ENCODE measurements at regions of chr12 and their contacts with region 1.

Region 1: GRCh38 chr12:53379389-53380103 is 430 bp upstream of the SP1 start:
- DNase-seq: peak; percentile 92 to 100
- ATAC-seq: peak; percentile 84 to 92 (median 90)
- H3K4me3 ChIP-seq: peak overlapping the region; percentile 44 to 88 (median 64)
- H3K27ac ChIP-seq: peak overlapping the region; percentile 92 to 99 (median 98)
- H3K4me1 ChIP-seq: peaks cover 18 to 46% (median 44%) of the 10 kb centered on the region in 9 donors
- H3K27me3 ChIP-seq: no peaks in the 10 kb centered on the region
- CTCF ChIP-seq: no peak

Region 2: GRCh38 chr12:53365245-53365904 is 14.2 kb before region 1 on chr12:
- intact Hi-C with region 1: no loop called
- DNase-seq: no peak
- ATAC-seq: peak in 7 of 8 donors; percentile 28 to 83 (median 56)
- H3K4me3 ChIP-seq: no peak overlapping the region
- H3K27ac ChIP-seq: peak overlapping the region in 2 of 10 donors; percentile 22 to 85
- H3K4me1 ChIP-seq: peaks cover under 1 to 44% (median 3%) of the 10 kb centered on the region in 9 donors
- H3K27me3 ChIP-seq: no peaks in the 10 kb centered on the region
- CTCF ChIP-seq: no peak

Region 3: GRCh38 chr12:53414756-53415417 is 35.3 kb after region 1 on chr12:
- intact Hi-C with region 1: loop called in 1 of 10 experiments (anchors 5 kb)
- DNase-seq: no peak
- ATAC-seq: peak in 2 of 8 donors; percentile 4 to 19
- H3K4me3 ChIP-seq: no peak overlapping the region
- H3K27ac ChIP-seq: peak overlapping the region in 3 of 10 donors; percentile 11 to 62 (median 23)
- H3K4me1 ChIP-seq: peaks cover 15 to 56% (median 39%) of the 10 kb centered on the region in 9 donors
- H3K27me3 ChIP-seq: no peaks in the 10 kb centered on the region
- CTCF ChIP-seq: no peak

Region 4: DNA sequence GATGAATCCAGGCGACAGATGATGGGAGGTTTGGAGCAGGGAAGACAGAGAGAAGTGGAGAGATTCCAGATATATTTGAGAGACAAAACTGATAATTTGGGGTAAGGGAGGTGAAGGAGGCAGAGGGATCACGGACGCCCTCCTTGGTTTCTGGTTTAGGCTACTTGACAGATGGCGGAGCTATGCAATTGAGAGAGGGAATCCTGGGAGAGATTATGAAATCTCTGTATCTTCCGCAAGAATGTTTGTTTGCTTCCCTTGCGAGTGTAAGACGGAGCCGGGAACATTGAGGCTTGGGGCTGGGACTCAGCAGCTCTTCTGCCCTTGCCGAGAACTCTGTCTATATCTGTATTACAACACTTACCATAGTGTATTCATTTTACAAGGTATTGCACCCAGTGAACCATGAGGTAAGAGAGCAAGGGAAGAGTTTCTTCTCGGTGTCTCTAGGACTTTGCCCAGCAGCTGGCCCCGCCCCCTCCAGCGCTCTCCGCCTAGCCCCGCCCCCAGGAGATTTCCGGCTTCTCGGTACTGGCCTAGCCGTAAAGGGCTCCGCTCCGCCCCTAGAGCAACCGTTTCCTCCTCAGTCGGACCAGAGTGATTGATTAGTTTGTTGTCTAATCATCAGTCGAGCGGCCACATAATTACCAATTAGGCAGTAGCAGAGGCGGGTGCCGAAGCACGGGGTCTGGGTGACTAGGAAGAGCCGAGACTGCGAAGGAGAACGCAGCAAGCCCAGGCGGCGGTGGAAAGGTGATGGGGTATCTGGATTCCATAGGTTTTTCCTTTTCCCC is 61.7 kb after region 1 on chr12 and contains the start of gene PRR13:
- intact Hi-C with region 1: loop called in 1 of 10 experiments (anchors 1 kb)
- DNase-seq: peak; percentile 98 to 100
- ATAC-seq: peak; percentile 98 to 100 (median 99)
- H3K4me3 ChIP-seq: peak within 1 kb of the TSS; percentile 48 to 91 (median 74)
- H3K27ac ChIP-seq: peak within 1 kb of the TSS; percentile 42 to 94 (median 88)
- H3K4me1 ChIP-seq: peaks cover 7 to 45% (median 18%) of the 10 kb centered on the region in 9 donors
- H3K27me3 ChIP-seq: no peaks in the 10 kb centered on the region
- CTCF ChIP-seq: peak in 1 of 9 donors; percentile 3
- total RNA-seq, gene PRR13: 28.6 to 70.0 (median 55.4) TPM